GM13977 (cell line): ENCODE measurements at regions of chr9 and their contacts with region 1.

Region 1: GRCh38 chr9:76810377-76810957 is 46.2 kb downstream of the PCA3 start:
- DNase-seq: peak; percentile 39
- CTCF ChIP-seq: peak; percentile 81

Region 2: GRCh38 chr9:76403352-76403751 is 407.1 kb before region 1 on chr9:
- in situ Hi-C with region 1: no loop called
- DNase-seq: peak; percentile 44
- CTCF ChIP-seq: peak; percentile 52

Region 3: DNA sequence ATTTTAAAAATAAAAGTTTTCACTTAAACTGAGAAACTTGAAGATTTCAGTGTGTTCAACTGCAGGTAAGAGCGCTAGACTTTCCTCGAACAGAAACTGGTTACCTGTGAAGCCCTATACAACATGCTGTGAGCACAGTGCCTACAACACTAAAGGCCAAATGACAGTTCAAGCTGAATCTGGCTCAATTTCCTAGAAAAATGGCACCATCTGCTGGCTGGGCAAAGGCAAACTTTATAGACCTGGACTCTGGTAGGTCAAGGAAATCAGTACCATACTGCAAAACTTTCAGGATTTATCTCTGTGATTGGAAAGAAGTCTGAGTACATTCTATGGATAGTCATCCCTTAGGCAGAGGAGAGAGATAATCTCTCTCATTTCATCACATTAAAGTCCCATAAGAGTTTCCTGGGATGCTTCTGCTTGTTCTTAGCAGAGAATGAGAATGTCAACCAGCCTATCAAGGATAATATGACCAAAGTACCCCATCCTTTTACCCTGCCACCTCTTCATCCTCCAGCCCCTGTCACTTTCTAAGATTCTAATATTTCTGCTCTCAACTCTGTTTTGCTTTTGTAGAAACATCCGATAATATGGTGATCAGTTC is 177.2 kb after region 1 on chr9:
- in situ Hi-C with region 1: loop called (anchors 25 kb)
- DNase-seq: peak; percentile 53
- CTCF ChIP-seq: peak; percentile 59

Region 4: GRCh38 chr9:77131399-77131798 is 320.9 kb after region 1 on chr9:
- in situ Hi-C with region 1: loop called (anchors 25 kb)
- DNase-seq: no peak
- CTCF ChIP-seq: no peak

Region 5: GRCh38 chr9:77276799-77277198 is 466.3 kb after region 1 on chr9:
- in situ Hi-C with region 1: no loop called
- DNase-seq: no peak
- CTCF ChIP-seq: no peak

Region 6: DNA sequence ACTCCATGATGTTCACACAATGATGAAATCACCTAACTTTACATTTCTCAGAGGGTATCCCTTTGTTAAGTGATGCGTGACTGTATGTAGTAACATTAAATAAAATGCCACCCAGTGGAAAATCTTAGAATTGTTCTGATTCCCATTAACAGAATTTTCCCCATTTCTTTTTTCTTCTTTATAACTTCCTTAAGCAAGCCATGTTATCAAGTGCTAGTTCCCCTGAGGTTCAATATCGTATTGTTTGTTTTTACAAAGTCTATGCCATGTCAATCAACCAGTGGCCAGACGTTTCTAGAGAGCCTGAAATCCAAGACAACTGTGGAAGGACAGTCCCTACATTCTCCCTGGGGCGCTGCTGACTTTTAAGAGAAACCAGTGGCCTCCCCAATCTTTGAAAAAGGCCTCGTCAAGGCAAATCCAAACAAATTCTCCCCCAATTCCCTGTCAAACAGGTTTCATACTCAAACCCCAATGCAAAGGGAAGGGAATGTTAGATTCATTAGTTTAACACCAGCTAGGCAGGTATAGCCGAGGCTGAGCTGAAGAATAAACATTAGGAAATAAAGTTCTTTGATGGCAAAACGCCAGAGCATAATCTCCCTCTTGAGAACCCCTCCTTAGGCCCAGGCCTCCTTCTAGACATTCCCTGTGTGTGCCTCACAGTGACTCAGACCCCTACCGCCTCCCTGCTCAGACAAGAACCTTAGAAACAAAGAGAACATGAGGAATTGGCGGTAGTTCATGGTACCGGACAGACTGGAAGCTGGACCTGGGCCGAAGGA is 639.0 kb after region 1 on chr9:
- in situ Hi-C with region 1: no loop called
- DNase-seq: no peak
- CTCF ChIP-seq: no peak